ENCODE measurements at regions of chr7 and their contacts with region 1.

Region 1: GRCh38 chr7:35424869-35425495 is 171.1 kb upstream of the TBX20 start:
- DNase-seq: no peak
- H3K4me3 ChIP-seq: no peak overlapping the region
- CTCF ChIP-seq: peak; percentile 72

Region 2: GRCh38 chr7:35465791-35466336 is 40.9 kb after region 1 on chr7:
- CTCF ChIA-PET with region 1: no interaction called
- POLR2A ChIA-PET with region 1: no interaction called
- DNase-seq: no peak
- H3K4me3 ChIP-seq: no peak overlapping the region
- CTCF ChIP-seq: no peak

Region 3: GRCh38 chr7:35519971-35520809 is 95.2 kb after region 1 on chr7:
- CTCF ChIA-PET with region 1: interaction called, 10 read pairs
- POLR2A ChIA-PET with region 1: no interaction called
- DNase-seq: no peak
- H3K4me3 ChIP-seq: no peak overlapping the region
- CTCF ChIP-seq: peak; percentile 72

Region 4: GRCh38 chr7:35537067-35538023 is 112.4 kb after region 1 on chr7:
- CTCF ChIA-PET with region 1: interaction called, 15 read pairs
- POLR2A ChIA-PET with region 1: no interaction called
- DNase-seq: no peak
- H3K4me3 ChIP-seq: peak overlapping the region; percentile 53
- CTCF ChIP-seq: peak; percentile 99